ENCODE measurements at regions of chr12 and their contacts with region 1.

Region 1: DNA sequence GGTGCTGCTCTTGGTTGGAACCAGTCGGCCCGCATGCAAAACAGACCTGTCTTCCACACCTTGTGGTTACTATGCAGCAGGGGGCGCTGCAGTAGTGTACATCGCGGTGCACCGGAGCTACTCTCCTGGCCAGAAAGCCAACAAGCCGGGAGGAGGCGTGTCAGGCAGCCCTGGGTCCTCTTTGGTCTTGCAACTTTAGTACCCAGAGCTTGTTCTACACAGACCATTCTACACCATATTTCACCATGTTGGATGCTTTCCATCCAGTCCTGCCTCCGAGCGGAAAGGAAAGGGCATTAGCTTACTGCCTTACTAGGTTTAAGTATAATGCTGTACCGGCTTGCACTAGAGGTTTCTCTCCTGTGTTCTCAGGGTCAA is 927 bp upstream of the TMTC2 start:
- DNase-seq: peak; percentile 91 to 97 (median 95)
- ATAC-seq: peak; percentile 85 to 88 (median 87)
- H3K4me3 ChIP-seq: peak overlapping the region; percentile 55 to 93 (median 76)
- H3K27ac ChIP-seq: peak overlapping the region in 11 of 12 donors; percentile 63 to 97 (median 91)
- H3K4me1 ChIP-seq: peaks cover 0 to 26% (median 3%) of the 10 kb centered on the region in 12 donors
- H3K27me3 ChIP-seq: no peaks in the 10 kb centered on the region
- CTCF ChIP-seq: peak; percentile 80 to 95 (median 90)
- POLR2A ChIP-seq: no peak

Region 2: DNA sequence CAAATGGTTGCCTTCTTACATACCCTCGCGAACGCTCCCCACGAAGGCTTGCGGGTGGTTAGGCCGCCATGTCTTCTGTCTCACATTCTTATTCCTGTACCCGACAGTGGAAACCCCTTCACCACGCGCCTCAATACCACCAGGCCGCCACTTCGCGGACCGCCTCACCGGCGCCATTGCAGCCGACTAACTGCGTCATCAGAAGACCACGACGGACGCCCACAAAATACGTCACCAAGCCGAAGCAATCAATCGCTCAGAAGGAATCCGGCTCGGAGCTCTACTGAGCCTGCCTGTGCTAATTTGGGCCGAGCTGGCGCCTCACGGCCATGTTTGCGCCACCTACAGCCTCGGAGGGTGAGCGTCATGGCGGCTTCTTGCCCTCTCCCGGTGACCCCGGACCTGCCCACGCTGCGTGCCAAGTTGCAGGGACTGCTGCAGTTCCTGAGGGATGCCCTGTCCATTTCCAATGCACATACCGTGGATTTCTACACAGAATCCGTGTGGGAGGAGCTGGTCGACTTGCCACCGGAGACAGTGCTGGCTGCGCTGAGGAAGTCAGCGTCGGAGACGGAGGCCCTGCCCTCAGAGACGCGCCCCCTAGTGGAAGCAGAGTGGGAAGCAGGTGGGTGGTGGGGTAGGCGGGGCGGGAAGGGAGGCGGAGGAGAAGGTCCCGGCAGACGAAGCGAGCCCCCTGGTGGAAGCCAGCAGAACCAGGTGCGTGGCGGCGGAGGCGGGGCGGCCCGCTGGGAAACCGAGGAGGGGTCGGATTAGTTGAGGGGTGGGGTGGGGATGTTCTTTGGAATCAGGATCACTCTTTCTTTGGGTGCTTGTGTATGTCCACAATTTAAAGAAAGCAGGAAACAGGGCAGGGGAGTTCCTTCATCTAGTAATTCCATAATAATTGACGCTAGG is 327.3 kb before region 1 on chr12 and contains the starts of genes CCDC59 and METTL25:
- intact Hi-C with region 1: loop called in 1 of 10 experiments (anchors 2 kb)
- DNase-seq: peak; percentile 97 to 98 (median 98)
- ATAC-seq: peak; percentile 98
- H3K4me3 ChIP-seq: peak within 1 kb of the TSS; percentile 75 to 98 (median 90)
- H3K27ac ChIP-seq: peak within 1 kb of the TSS; percentile 89 to 99 (median 96)
- H3K4me1 ChIP-seq: peaks cover 13 to 51% (median 38%) of the 10 kb centered on the region in 12 donors
- H3K27me3 ChIP-seq: no peaks in the 10 kb centered on the region
- CTCF ChIP-seq: peak; percentile 75 to 99 (median 94)
- POLR2A ChIP-seq: peak in 1 of 2 donors; percentile 65
- total RNA-seq, gene CCDC59: 20.0 to 40.4 (median 24.5) TPM
- total RNA-seq, gene METTL25: 6.0 to 19.6 (median 13.5) TPM

Region 3: GRCh38 chr12:82774666-82775065 is 88.9 kb after region 1 on chr12:
- intact Hi-C with region 1: no loop called
- DNase-seq: no peak
- ATAC-seq: no peak
- H3K4me3 ChIP-seq: no peak overlapping the region
- H3K27ac ChIP-seq: peak overlapping the region in 1 of 12 donors; percentile 26
- H3K4me1 ChIP-seq: no peaks in the 10 kb centered on the region
- H3K27me3 ChIP-seq: no peaks in the 10 kb centered on the region
- CTCF ChIP-seq: no peak
- POLR2A ChIP-seq: no peak

Region 4: GRCh38 chr12:83389237-83389996 is 703.6 kb after region 1 on chr12:
- intact Hi-C with region 1: loop called in 1 of 10 experiments (anchors 5 kb)
- DNase-seq: peak in 2 of 5 donors; percentile 7 to 17
- ATAC-seq: no peak
- H3K4me3 ChIP-seq: no peak overlapping the region
- H3K27ac ChIP-seq: no peak overlapping the region
- H3K4me1 ChIP-seq: no peaks in the 10 kb centered on the region
- H3K27me3 ChIP-seq: no peaks in the 10 kb centered on the region
- CTCF ChIP-seq: peak in 5 of 12 donors; percentile 6 to 32 (median 22)
- POLR2A ChIP-seq: no peak

Region 5: DNA sequence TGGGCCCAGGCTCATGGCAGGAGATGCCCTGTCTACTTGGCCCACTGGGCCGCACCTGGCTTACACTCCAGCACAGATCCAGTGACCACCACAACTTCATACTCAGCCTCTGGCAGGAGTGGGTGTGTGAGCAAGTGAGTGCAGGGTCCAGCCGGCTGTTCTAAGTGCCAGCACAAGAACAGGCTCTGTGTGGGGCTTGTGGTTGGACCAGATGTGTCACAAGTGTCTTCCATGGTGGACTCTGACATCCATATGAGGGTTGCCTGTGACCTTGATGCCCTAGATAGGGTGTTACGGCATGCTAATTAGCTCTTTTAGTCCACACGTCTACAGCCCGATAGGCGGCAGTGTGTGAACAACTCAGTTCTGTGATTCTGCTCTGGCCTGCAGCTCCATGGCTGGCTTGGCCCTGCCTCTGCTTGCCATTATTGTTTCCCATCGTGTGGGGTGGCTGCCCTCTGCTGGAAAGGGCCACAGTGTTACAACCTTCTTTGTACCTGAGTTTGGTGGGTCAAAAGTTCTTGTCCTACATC is 1137.7 kb after region 1 on chr12:
- intact Hi-C with region 1: loop called in 6 of 10 experiments (anchors 5 to 10 kb)
- DNase-seq: peak in 4 of 5 donors; percentile 24 to 51 (median 44)
- ATAC-seq: peak in 3 of 4 donors; percentile 79 to 84 (median 81)
- H3K4me3 ChIP-seq: no peak overlapping the region
- H3K27ac ChIP-seq: no peak overlapping the region
- H3K4me1 ChIP-seq: peaks cover 0 to 5% (median 0%) of the 10 kb centered on the region in 12 donors
- H3K27me3 ChIP-seq: no peaks in the 10 kb centered on the region
- CTCF ChIP-seq: peak in 11 of 12 donors; percentile 7 to 55 (median 37)
- POLR2A ChIP-seq: no peak

Region 6: GRCh38 chr12:84397263-84397662 is 1711.5 kb after region 1 on chr12:
- intact Hi-C with region 1: loop called in 4 of 10 experiments (anchors 5 to 10 kb)
- DNase-seq: no peak
- ATAC-seq: no peak
- H3K4me3 ChIP-seq: no peak overlapping the region
- H3K27ac ChIP-seq: no peak overlapping the region
- H3K4me1 ChIP-seq: no peaks in the 10 kb centered on the region
- H3K27me3 ChIP-seq: no peaks in the 10 kb centered on the region
- CTCF ChIP-seq: peak in 7 of 12 donors; percentile 9 to 40 (median 25)
- POLR2A ChIP-seq: no peak

Region 7: DNA sequence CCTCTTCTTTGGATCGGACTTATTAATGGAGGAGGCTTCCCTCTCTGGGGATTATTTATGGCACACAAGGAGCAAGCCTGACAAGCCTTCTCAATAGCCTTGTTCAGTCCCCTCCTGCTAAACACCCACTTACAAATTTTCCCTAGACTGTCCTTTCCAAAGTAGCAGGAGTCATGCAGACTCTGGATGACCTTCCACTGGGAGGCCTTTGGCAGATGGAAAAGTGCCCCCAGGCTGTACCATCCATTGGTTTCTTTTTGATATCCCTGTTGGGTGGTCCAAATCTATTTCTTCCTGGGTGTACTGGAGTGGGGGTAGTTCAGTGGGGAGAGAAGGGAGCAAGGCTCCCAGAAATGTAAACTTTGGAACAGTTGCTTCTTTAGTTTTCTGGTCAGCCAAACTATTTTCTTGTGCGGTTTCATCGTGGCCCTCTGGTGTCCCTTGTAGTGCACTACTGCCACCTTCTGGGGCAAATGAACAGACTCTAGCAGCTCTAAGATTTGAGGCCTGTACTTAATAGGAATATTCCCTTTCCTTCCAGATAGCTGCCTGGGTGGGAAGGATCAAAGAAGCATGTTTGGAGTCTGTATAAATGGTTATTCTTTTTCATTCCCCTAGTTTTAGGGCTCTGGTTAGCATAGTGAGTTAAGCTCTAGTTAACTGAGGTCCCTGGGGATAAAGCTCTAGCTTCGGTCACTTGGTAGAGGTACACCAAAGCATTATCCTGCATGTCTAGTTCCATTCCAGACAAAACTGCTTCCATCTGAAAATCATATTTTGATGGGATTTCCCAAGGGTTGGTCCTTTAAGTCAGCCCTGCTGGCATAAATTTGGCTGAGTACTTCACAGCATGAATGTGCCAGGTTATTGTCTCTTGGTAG is 1817.4 kb after region 1 on chr12:
- intact Hi-C with region 1: loop called in 4 of 10 experiments (anchors 5 to 10 kb)
- DNase-seq: peak in 2 of 5 donors; percentile 21 to 29
- ATAC-seq: peak in 2 of 4 donors; percentile 63 to 72
- H3K4me3 ChIP-seq: no peak overlapping the region
- H3K27ac ChIP-seq: no peak overlapping the region
- H3K4me1 ChIP-seq: peaks cover 0 to 15% (median 0%) of the 10 kb centered on the region in 12 donors
- H3K27me3 ChIP-seq: no peaks in the 10 kb centered on the region
- CTCF ChIP-seq: peak; percentile 28 to 60 (median 44)
- POLR2A ChIP-seq: no peak